ENCODE measurements at regions of chr6 and their contacts with region 1.

Region 1: GRCh38 chr6:97394160-97394748 is 111.2 kb upstream of the MMS22L start:
- DNase-seq: no peak
- H3K4me3 ChIP-seq: no peak overlapping the region
- H3K27ac ChIP-seq: no peak overlapping the region
- H3K4me1 ChIP-seq: no peaks in the 10 kb centered on the region
- H3K27me3 ChIP-seq: no peaks in the 10 kb centered on the region
- CTCF ChIP-seq: peak; percentile 59 to 71 (median 61)

Region 2: GRCh38 chr6:97068211-97068610 is 326.0 kb before region 1 on chr6:
- intact Hi-C with region 1: loop called (anchors 5 kb)
- DNase-seq: no peak
- H3K4me3 ChIP-seq: no peak overlapping the region
- H3K27ac ChIP-seq: no peak overlapping the region
- H3K4me1 ChIP-seq: no peaks in the 10 kb centered on the region
- H3K27me3 ChIP-seq: no peaks in the 10 kb centered on the region
- CTCF ChIP-seq: peak in 2 of 3 experiments; percentile 14 to 46

Region 3: GRCh38 chr6:97186416-97186999 is 207.7 kb before region 1 on chr6:
- intact Hi-C with region 1: loop called (anchors 1 kb)
- DNase-seq: peak in 1 of 2 donors; percentile 62
- H3K4me3 ChIP-seq: no peak overlapping the region
- H3K27ac ChIP-seq: no peak overlapping the region
- H3K4me1 ChIP-seq: no peaks in the 10 kb centered on the region
- H3K27me3 ChIP-seq: no peaks in the 10 kb centered on the region
- CTCF ChIP-seq: peak in 2 of 3 experiments; percentile 59 to 72

Region 4: DNA sequence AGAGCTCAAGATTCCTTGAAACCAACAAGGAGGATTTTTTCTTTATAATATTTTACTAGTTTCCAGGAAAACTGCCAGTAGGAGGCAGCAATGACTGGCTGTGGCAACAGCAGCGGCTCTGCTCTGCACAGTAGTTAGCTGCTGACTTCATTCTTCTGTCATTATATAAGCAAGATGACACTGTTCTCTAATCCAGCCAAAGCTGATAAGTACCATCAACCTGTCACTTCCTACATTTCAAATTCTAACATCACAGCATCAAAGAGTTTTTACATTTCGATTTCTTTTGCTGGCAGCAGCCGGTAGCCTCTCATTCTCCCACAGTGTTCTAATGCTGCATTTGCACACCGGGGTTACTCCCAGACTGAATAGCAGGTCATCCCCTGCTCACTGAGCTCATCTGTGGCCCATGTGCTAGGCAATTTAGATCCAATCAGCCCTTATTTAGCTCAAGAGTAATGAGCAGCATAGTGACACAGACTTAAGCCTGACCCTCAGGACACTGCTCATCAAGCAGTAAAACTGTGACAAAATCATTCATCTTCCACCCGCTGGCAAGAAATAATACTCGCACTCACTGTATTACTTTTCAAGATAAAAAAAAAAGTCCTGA is 179.0 kb before region 1 on chr6:
- intact Hi-C with region 1: loop called (anchors 10 kb)
- DNase-seq: no peak
- H3K4me3 ChIP-seq: no peak overlapping the region
- H3K27ac ChIP-seq: no peak overlapping the region
- H3K4me1 ChIP-seq: no peaks in the 10 kb centered on the region
- H3K27me3 ChIP-seq: no peaks in the 10 kb centered on the region
- CTCF ChIP-seq: peak in 1 of 3 experiments; percentile 29

Measured in ascending aorta (tissue), 2 donors.